A549 (cell line): ENCODE measurements at regions of chr12 and their contacts with region 1.

Region 1: DNA sequence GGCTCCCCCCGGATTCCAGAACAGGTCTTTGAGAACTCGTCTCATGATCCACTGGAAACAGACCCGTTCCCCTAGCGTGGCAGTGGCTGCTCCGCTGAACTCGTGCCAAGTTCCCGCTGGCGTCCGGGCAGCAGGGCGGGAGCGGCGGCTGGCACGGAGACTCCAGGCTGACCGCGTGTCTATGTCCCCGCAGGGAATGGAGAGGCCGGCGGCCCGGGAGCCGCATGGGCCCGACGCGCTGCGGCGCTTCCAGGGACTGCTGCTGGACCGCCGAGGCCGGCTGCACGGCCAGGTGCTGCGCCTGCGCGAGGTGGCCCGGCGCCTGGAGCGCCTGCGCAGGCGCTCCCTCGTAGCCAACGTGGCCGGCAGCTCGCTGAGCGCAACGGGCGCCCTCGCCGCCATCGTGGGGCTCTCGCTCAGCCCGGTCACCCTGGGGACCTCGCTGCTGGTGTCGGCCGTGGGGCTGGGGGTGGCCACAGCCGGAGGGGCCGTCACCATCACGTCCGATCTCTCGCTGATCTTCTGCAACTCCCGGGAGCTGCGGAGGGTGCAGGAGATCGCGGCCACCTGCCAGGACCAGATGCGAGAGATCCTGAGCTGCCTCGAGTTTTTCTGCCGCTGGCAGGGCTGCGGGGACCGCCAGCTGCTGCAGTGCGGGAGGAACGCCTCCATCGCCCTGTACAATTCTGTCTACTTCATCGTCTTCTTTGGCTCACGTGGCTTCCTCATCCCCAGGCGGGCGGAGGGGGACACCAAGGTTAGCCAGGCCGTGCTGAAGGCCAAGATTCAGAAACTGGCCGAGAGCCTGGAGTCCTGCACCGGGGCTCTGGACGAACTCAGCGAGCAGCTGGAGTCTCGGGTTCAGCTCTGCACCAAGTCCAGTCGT is 1.5 kb downstream of the APOLD1 start:
- DNase-seq: peak; percentile 87 to 91
- ATAC-seq: peak; percentile 90 to 94
- H3K4me3 ChIP-seq: peak overlapping the region; percentile 44
- H3K27ac ChIP-seq: peak overlapping the region; percentile 85 to 94
- H3K4me1 ChIP-seq: peaks cover 35% of the 10 kb centered on the region
- CTCF ChIP-seq: no peak
- EP300 ChIP-seq: no peak
- POLR2A ChIP-seq: peak; percentile 89
- RAD21 ChIP-seq: no peak

Region 2: GRCh38 chr12:12007001-12007712 is 779.8 kb before region 1 on chr12:
- CTCF ChIA-PET with region 1: no interaction called
- POLR2A ChIA-PET with region 1: no interaction called
- DNase-seq: no peak
- ATAC-seq: no peak
- H3K4me3 ChIP-seq: no peak overlapping the region
- H3K27ac ChIP-seq: no peak overlapping the region
- H3K4me1 ChIP-seq: no peaks in the 10 kb centered on the region
- CTCF ChIP-seq: no peak
- EP300 ChIP-seq: no peak
- POLR2A ChIP-seq: no peak
- RAD21 ChIP-seq: no peak

Region 3: GRCh38 chr12:12736759-12737676 is 49.9 kb before region 1 on chr12:
- CTCF ChIA-PET with region 1: interaction called, 15 read pairs
- POLR2A ChIA-PET with region 1: interaction called, 5 read pairs
- DNase-seq: peak; percentile 50
- ATAC-seq: peak; percentile 87 to 93
- H3K4me3 ChIP-seq: no peak overlapping the region
- H3K27ac ChIP-seq: peak overlapping the region in 1 of 2 experiments; percentile 31; a peak in 1 of 6 replicates
- H3K4me1 ChIP-seq: peaks cover 4% of the 10 kb centered on the region; the same call in 1 of the 3 replicates
- CTCF ChIP-seq: peak; percentile 63
- EP300 ChIP-seq: no peak
- POLR2A ChIP-seq: no peak
- RAD21 ChIP-seq: peak; percentile 49 to 65

Region 4: DNA sequence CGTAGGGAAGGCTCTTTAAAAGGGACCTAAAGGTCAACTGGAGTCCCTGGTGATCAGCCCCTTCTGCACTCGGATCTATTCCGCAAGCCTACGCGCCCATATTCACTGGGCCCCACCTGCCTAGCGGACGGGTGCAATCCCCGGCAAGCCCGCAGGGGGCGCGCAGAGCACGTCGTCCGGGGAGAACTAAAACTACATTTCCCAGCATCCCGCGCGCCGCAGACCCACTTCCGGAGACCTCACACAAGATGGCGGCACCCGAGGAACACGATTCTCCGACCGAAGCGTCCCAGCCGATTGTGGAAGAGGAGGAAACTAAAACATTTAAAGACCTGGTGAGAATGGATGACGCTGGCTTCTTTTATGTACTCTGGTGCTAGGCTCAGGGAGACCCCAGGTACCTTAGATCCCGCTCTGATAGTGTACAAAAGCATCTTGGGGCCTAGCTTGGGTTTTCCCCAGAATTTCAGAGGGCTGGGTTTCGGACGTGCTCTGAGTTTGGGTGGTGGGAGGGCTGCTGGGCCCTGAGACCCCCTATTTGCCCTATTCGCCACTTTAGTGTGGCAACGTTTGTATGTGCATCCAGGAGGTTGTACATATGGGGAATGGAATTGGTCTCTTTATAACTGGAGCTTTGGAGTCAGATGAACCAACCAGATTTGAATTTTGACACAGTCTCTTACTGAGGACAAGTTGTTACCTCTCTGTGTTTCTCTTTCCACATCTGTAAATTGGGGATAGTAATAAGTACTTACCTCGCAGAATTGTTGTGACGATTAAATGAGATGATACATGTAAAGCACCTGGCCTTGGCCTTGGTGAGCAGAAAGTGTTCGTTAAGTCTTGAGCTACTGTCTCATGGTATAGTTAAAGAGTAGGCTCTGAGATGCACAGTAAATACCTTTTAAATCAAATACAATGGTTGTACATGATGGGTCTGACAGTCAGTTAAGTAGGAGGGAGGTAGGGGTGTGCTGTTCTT is 26.5 kb after region 1 on chr12 and contains the start of gene DDX47:
- CTCF ChIA-PET with region 1: interaction called, 80 read pairs
- POLR2A ChIA-PET with region 1: interaction called, 13 read pairs
- DNase-seq: peak; percentile 87 to 95
- ATAC-seq: peak; percentile 93 to 94
- H3K4me3 ChIP-seq: peak within 1 kb of the TSS; percentile 92
- H3K27ac ChIP-seq: peak within 1 kb of the TSS; percentile 90 to 92
- H3K4me1 ChIP-seq: peaks cover 43% of the 10 kb centered on the region
- CTCF ChIP-seq: peak; percentile 81
- EP300 ChIP-seq: no peak
- POLR2A ChIP-seq: peak; percentile 46
- RAD21 ChIP-seq: peak; percentile 60 to 72
- polyA plus RNA-seq, gene DDX47: 118 and 144 TPM in 2 replicates

Region 5: GRCh38 chr12:12890815-12891645 is 104.1 kb after region 1 on chr12 and contains the start of gene GPRC5A:
- CTCF ChIA-PET with region 1: interaction called, 37 read pairs
- POLR2A ChIA-PET with region 1: interaction called, 13 read pairs
- DNase-seq: peak; percentile 90 to 99
- ATAC-seq: peak; percentile 87 to 89
- H3K4me3 ChIP-seq: peak within 1 kb of the TSS; percentile 54
- H3K27ac ChIP-seq: peak within 1 kb of the TSS; percentile 94
- H3K4me1 ChIP-seq: peaks cover 47% of the 10 kb centered on the region
- CTCF ChIP-seq: peak; percentile 40
- EP300 ChIP-seq: peak; percentile 61 to 79; a peak in 3 of 5 replicates
- POLR2A ChIP-seq: peak; percentile 99
- RAD21 ChIP-seq: peak; percentile 63 to 64
- polyA plus RNA-seq, gene GPRC5A: 296 and 321 TPM in 2 replicates

Region 6: DNA sequence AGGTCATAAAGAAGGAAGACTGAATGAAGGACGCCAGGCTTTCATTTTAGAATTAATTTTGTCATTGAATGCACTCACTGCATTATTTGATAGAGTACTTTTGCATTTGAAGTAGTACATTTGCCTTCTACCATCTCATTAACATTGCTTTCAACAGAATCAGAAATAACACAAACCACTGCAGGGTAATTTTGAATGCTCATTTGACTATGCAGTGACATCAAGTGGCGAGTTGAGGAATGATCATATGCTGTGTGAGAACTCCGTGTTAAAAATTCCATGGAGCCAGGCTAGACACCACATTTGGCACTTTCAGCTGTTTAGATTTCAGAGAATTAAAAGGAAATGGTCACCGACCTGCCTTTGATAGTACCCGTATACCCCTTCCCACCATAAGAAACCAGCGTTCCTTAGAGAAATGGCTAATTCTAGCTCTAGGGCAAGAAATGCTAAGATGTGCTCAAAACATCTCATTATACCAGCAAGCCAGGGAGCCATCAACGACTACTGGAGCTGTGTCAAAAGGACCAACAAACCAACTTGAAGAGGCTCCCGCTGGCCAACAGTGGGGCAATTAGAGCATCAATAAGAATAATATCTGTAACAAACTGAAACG is 196.6 kb after region 1 on chr12:
- CTCF ChIA-PET with region 1: interaction called, 13 read pairs
- POLR2A ChIA-PET with region 1: interaction called, 3 read pairs
- DNase-seq: peak; percentile 61 to 73
- ATAC-seq: peak; percentile 65 to 66; a peak in 5 of 6 replicates
- H3K4me3 ChIP-seq: no peak overlapping the region
- H3K27ac ChIP-seq: no peak overlapping the region
- H3K4me1 ChIP-seq: peaks cover 30% of the 10 kb centered on the region
- CTCF ChIP-seq: peak; percentile 86
- EP300 ChIP-seq: no peak
- POLR2A ChIP-seq: no peak
- RAD21 ChIP-seq: peak; percentile 84 to 91

Region 7: GRCh38 chr12:13539051-13539450 is 752.1 kb after region 1 on chr12:
- CTCF ChIA-PET with region 1: no interaction called
- POLR2A ChIA-PET with region 1: no interaction called
- DNase-seq: no peak
- ATAC-seq: no peak
- H3K4me3 ChIP-seq: no peak overlapping the region
- H3K27ac ChIP-seq: no peak overlapping the region
- H3K4me1 ChIP-seq: peaks cover 6% of the 10 kb centered on the region; the same call in 2 of the 3 replicates
- CTCF ChIP-seq: no peak
- EP300 ChIP-seq: no peak
- POLR2A ChIP-seq: no peak
- RAD21 ChIP-seq: no peak